ENCODE measurements at regions of chr13 and their contacts with region 1.

Region 1: GRCh38 chr13:76903544-76904162 is 17.4 kb upstream of the KCTD12 start:
- DNase-seq: peak in 1 of 2 donors; percentile 43
- H3K4me3 ChIP-seq: no peak overlapping the region
- H3K27ac ChIP-seq: no peak overlapping the region
- H3K4me1 ChIP-seq: no peaks in the 10 kb centered on the region
- H3K27me3 ChIP-seq: no peaks in the 10 kb centered on the region
- CTCF ChIP-seq: peak; percentile 90 to 95 (median 93)
- POLR2A ChIP-seq: no peak

Region 2: DNA sequence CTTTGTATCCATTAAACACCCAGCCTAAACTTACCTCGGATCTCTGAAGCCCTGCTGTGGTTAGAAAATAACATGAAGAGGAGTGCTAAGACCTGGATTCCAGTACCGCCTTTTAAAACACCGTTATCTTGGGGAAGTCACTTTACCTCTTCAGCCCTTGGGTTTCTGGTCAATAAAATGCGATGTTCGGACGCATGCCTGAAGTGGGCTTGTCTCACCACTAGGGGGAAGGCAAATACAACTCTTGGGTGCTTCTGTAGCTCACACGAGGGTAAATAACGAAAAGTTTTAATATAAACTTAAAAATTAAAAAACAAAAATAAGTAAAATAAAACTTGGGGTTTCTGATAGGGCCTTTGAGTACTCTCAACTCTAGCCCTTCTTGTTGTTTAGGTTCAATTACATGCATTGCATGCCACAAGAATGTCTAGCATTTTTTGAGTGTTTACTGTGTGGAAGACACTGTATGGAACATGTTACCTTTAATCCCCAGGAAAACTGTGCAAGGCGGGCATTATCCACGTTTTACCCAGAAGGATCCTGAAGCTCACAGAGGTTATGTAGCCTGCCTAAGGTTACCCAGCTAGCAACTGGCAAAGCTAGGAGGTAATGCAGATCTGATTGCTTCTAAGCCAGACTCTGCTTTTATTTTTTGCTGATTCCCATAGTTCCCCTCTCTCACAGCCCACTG is 1027.1 kb before region 1 on chr13:
- intact Hi-C with region 1: loop called (anchors 10 kb)
- DNase-seq: peak in 1 of 2 donors; percentile 49
- H3K4me3 ChIP-seq: no peak overlapping the region
- H3K27ac ChIP-seq: no peak overlapping the region
- H3K4me1 ChIP-seq: no peaks in the 10 kb centered on the region
- H3K27me3 ChIP-seq: no peaks in the 10 kb centered on the region
- CTCF ChIP-seq: peak; percentile 82 to 93 (median 89)
- POLR2A ChIP-seq: no peak

Region 3: GRCh38 chr13:76438050-76438449 is 465.6 kb before region 1 on chr13:
- intact Hi-C with region 1: no loop called
- DNase-seq: no peak
- H3K4me3 ChIP-seq: no peak overlapping the region
- H3K27ac ChIP-seq: no peak overlapping the region
- H3K4me1 ChIP-seq: no peaks in the 10 kb centered on the region
- H3K27me3 ChIP-seq: no peaks in the 10 kb centered on the region
- CTCF ChIP-seq: no peak
- POLR2A ChIP-seq: no peak

Region 4: GRCh38 chr13:76886292-76887075 is 17.2 kb before region 1 on chr13 and contains the start of gene KCTD12:
- intact Hi-C with region 1: loop called (anchors 1 kb)
- DNase-seq: peak; percentile 73 to 74
- H3K4me3 ChIP-seq: peak within 1 kb of the TSS; percentile 58 to 88 (median 87)
- H3K27ac ChIP-seq: peak within 1 kb of the TSS; percentile 77 to 95
- H3K4me1 ChIP-seq: peaks cover 0 to 3% of the 10 kb centered on the region in 2 donors
- H3K27me3 ChIP-seq: no peaks in the 10 kb centered on the region
- CTCF ChIP-seq: peak in 1 of 3 donors; percentile 24
- POLR2A ChIP-seq: no peak
- total RNA-seq, gene KCTD12: 59.7 to 117 (median 65.9) TPM

Measured in breast epithelium (tissue), 4 donors.